Activated CD8-positive, alpha-beta T cell treated with anti-CD3 and anti-CD28 coated beads, Interleukin-2, amount 10 ng/mL, durations not matched to agents 7 days and 5 days (primary cell): ENCODE measurements at regions of chr15 and their contacts with region 1.

Region 1: DNA sequence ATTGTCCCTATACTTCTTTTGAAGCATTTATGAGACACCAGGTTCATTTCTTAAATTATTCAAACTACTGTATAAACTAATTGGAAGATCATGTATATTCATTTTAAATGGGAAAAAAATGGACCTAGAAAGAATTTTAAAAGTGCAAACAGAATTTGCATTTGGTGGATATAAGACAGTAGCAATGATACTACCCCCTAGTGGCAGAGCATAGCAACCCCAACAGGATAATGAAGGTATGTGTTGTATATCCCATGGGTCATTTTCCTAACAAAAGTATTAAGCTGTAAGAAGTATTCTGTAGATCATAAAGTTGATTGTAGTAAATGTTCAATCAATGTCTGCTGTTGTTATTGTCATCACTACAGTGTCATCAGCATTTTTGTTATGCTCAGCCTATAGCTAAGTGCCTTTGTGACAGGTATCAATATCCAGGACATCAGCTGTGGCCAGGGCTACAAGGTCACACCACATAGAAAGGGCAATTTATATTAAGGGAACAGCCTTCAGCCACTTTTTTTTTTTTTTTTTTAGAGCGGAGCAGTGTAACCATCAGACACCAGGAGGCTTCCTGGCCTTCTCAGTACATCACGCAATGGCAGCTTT is 175.8 kb downstream of the FOXB1 start:
- DNase-seq: peak; percentile 55
- ATAC-seq: no peak
- H3K4me3 Mint-ChIP-seq: no peak overlapping the region
- H3K27ac Mint-ChIP-seq: no peak overlapping the region
- H3K4me1 Mint-ChIP-seq: no peaks in the 10 kb centered on the region
- H3K27me3 Mint-ChIP-seq: peaks cover 23% of the 10 kb centered on the region

Region 2: GRCh38 chr15:59879506-59880265 is 300.2 kb before region 1 on chr15:
- CTCF ChIA-PET with region 1: no interaction called
- POLR2A ChIA-PET with region 1: no interaction called
- DNase-seq: no peak
- ATAC-seq: no peak
- H3K4me3 Mint-ChIP-seq: no peak overlapping the region
- H3K27ac Mint-ChIP-seq: no peak overlapping the region
- H3K4me1 Mint-ChIP-seq: no peaks in the 10 kb centered on the region
- H3K27me3 Mint-ChIP-seq: peaks cover 11% of the 10 kb centered on the region

Region 3: GRCh38 chr15:60195611-60196010 is 15.7 kb after region 1 on chr15:
- CTCF ChIA-PET with region 1: interaction called, 13 read pairs
- POLR2A ChIA-PET with region 1: no interaction called
- DNase-seq: no peak
- ATAC-seq: no peak
- H3K4me3 Mint-ChIP-seq: no peak overlapping the region
- H3K27ac Mint-ChIP-seq: no peak overlapping the region
- H3K4me1 Mint-ChIP-seq: no peaks in the 10 kb centered on the region
- H3K27me3 Mint-ChIP-seq: peaks cover 40% of the 10 kb centered on the region

Region 4: GRCh38 chr15:60208709-60209108 is 28.8 kb after region 1 on chr15:
- CTCF ChIA-PET with region 1: no interaction called
- POLR2A ChIA-PET with region 1: no interaction called
- DNase-seq: no peak
- ATAC-seq: no peak
- H3K4me3 Mint-ChIP-seq: no peak overlapping the region
- H3K27ac Mint-ChIP-seq: no peak overlapping the region
- H3K4me1 Mint-ChIP-seq: no peaks in the 10 kb centered on the region
- H3K27me3 Mint-ChIP-seq: peaks cover 42% of the 10 kb centered on the region